ENCODE measurements at regions of chr2 and their contacts with region 1.

Region 1: GRCh38 chr2:144516981-144517865 is 2.7 kb downstream of the ZEB2 start:
- DNase-seq: no peak
- H3K4me3 ChIP-seq: peak overlapping the region; percentile 44 to 51
- H3K27ac ChIP-seq: peak overlapping the region; percentile 84
- H3K4me1 ChIP-seq: no peaks in the 10 kb centered on the region
- H3K27me3 ChIP-seq: peaks cover 13% of the 10 kb centered on the region
- CTCF ChIP-seq: no peak
- POLR2A ChIP-seq: no peak

Region 2: DNA sequence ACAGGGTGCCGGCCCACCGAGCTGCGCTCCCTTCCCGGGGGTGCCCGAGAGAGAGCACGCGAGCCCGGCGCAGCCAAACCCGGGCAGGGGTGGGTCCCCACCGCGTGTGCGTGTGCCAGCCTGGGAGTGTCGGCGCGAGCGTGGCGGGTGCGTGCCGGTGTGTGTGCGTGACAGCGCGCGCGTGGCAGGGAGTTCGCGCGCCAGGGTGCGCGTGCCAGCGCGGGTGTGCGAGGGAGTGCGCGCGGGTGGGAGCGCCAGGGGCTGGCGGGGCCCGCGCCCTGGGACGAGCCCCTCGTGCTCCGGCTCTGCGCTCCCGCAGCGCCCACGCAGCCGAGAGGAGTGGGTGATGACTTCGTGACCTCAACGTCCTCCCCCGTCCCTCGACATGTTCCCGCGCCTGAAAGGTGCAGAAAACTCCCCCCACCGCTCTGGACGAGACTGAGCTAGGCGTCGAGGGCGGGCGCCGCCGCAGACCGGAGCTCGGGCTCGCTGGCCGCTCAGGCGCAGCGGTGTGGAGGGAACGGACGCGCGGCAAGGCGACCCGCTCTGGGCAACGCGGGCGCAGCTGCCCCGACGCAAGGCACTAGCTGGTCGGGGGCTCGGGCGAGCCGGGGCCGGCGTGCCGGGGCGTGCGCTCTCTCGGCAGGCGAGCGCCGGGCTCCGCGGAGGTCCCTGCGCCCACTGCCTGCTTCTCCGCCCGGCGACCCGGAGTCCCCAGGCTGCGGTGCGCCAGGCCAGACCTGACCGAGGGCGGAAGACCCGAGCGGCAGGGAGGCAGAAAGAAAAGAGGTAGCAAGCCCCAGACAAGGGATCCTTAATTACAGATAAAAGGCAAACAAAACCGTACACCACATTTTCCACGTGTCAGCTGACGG is 580.1 kb before region 1 on chr2:
- intact Hi-C with region 1: loop called (anchors 5 kb)
- DNase-seq: no peak
- H3K4me3 ChIP-seq: peak overlapping the region; percentile 33 to 39
- H3K27ac ChIP-seq: peak overlapping the region; percentile 56 to 59
- H3K4me1 ChIP-seq: no peaks in the 10 kb centered on the region
- H3K27me3 ChIP-seq: no peaks in the 10 kb centered on the region
- CTCF ChIP-seq: no peak
- POLR2A ChIP-seq: no peak

Region 3: DNA sequence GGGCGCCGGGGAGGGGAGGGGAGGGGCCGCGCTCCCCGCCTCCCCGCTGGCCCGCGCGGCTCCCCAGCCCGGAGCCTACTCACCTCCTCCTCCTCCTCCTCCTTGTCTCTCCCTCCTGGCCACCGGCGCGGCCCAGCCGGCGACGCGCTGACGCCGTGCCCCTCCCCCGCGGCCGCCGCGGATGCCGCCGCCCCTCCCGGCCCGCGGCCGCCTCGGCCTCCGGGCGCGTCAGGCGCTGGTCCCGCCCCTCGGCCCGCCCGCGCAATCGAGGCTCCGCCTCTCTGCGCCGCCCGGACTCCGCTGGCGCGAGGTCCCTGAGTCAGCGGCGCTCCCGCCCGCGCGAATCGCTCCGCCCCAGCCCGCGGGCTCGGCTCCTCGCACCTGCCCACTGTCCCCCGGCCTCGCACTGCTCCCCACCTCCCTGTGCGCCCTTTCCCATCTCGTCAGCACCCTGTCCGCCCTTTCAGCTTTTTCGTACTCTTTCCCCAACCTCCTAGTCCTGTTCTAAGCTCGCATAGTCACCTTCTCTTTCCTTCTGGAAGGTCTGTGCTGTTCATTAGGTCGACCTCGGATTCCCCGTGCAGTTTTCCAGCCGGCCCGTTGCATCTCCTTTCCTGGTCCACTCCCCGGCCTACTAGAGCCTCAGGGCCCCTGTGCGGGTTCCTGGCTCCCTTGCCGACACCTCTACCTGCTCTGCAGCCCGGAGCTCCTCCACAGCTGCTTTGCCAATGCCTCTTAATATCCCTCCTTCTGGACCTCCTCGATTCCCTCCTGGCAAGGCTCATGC is 184.7 kb before region 1 on chr2:
- intact Hi-C with region 1: loop called (anchors 5 kb)
- DNase-seq: peak; percentile 78
- H3K4me3 ChIP-seq: peak overlapping the region; percentile 70 to 84
- H3K27ac ChIP-seq: peak overlapping the region; percentile 80 to 82
- H3K4me1 ChIP-seq: no peaks in the 10 kb centered on the region
- H3K27me3 ChIP-seq: no peaks in the 10 kb centered on the region
- CTCF ChIP-seq: no peak
- POLR2A ChIP-seq: no peak

Region 4: DNA sequence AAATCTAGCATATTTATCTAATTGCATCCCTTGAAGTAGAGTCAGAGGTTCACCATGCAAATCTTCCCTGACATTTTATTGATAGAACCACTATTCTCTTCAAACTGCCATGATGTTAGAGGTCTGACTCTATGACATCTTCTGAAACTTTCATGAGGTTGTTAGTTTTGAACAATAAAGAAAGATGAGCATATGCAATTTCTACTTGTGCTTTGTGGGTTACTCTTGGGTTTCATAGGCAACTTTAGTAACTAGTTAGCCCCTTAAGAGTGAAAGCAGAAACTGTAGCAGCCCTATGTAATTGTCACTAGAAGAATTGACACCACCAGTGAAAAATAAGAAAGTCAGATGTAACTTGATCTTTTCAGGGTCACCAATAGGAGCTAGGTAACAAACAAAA is 55.8 kb after region 1 on chr2:
- intact Hi-C with region 1: no loop called
- DNase-seq: no peak
- H3K4me3 ChIP-seq: no peak overlapping the region
- H3K27ac ChIP-seq: no peak overlapping the region
- H3K4me1 ChIP-seq: no peaks in the 10 kb centered on the region
- H3K27me3 ChIP-seq: no peaks in the 10 kb centered on the region
- CTCF ChIP-seq: no peak
- POLR2A ChIP-seq: no peak

Region 5: GRCh38 chr2:145752091-145752806 is 1235.0 kb after region 1 on chr2:
- intact Hi-C with region 1: loop called (anchors 5 kb)
- DNase-seq: peak; percentile 14
- H3K4me3 ChIP-seq: no peak overlapping the region
- H3K27ac ChIP-seq: peak overlapping the region in 1 of 2 donors; percentile 23
- H3K4me1 ChIP-seq: peaks cover 3% of the 10 kb centered on the region
- H3K27me3 ChIP-seq: no peaks in the 10 kb centered on the region
- CTCF ChIP-seq: peak in 3 of 4 experiments; percentile 45 to 60 (median 57)
- POLR2A ChIP-seq: no peak